ENCODE measurements at regions of chr4 and their contacts with region 1.

Region 1: DNA sequence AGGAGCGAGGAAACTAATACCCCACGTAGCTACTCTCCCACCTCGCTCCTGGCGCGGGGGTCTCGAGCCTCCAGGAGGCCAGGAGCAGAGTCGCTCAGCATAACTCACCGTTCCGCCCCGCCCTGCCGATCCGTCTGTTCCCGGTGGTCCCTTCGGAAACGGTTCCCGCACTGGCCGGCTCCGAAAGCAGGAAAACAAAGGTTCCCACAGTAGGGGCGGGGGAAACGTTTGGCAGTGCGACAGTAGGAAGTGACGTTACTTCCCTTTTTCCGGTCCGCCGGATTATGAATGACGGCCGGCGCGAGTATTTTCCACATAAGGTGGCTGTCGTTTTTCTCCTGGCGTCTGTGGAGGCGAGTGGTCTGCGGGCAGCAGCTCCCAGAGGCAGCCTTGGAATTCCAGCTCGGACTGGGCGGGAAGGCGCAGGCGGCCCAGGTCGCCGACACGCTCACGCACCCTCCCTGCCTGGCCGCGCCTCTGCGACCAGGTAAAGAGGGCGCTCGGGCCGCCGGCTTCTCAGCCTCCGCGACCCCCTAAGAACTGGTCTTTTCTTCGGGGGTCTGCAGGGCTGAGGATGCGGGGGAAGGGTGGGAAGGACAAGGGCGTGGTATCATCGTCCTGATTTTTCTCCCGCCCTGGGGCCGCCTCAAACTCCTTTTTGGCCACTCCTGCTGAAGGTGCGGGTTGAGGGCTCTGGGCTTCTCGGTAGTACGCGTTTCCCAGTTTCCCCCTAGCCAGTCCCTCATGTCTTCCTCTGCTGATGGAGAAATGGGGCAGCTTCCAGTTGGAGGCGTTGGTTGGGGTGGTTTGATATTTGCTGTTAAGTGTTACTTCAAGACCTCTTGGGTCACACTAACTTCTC is at the starts of genes GSTCD and INTS12:
- DNase-seq: peak; percentile 91 to 95
- ATAC-seq: peak; percentile 97 to 99 (median 99)
- H3K4me3 ChIP-seq: peak within 1 kb of the TSS; percentile 95
- H3K27ac ChIP-seq: peak within 1 kb of the TSS; percentile 91
- H3K4me1 ChIP-seq: peaks cover 18% of the 10 kb centered on the region
- H3K27me3 ChIP-seq: no peaks in the 10 kb centered on the region
- CTCF ChIP-seq: no peak
- total RNA-seq, gene GSTCD: 2.6 to 6.6 (median 4.5) TPM
- total RNA-seq, gene INTS12: 17.7 to 28.8 (median 20.2) TPM

Region 2: DNA sequence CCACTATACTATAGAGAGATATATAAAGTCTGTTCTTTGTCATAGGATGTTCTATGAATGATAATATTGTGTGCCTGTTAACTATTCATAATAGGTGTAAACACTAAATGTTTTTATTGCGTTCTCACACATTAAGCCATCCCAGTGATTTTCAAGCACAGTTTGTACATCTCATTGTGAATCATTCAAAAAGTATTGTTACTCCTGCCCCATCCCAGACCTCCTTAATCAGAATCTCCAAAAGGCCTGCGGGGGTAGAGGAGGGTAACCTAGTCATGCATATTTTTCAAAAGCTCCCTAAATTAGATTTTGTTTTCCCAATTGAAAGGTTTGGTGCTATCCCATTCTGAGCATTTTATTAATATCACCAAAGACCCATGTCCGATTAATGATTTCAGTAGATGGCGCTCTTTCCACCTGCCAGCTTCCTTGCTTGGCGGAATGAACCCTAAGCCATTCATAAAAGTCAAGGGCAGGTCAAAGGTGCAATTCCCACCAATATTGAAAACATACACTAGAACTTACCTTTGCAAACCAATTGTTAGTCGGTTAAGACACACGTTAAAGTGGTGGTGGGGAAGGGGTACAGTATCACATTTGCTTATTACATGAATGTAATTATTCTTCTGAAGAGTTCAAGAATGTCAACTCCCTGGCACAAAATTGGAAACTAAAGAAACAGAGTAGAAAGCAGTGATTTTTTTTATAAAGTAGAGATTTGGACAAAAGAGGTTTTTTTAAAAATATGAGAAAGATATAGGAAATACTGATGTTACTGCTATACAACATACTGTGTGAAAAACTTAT is 567.9 kb before region 1 on chr4:
- intact Hi-C with region 1: loop called in 1 of 2 experiments (anchors 5 kb)
- DNase-seq: no peak
- ATAC-seq: peak in 2 of 4 donors; percentile 67 to 78
- H3K4me3 ChIP-seq: no peak overlapping the region
- H3K27ac ChIP-seq: no peak overlapping the region
- H3K4me1 ChIP-seq: no peaks in the 10 kb centered on the region
- H3K27me3 ChIP-seq: no peaks in the 10 kb centered on the region
- CTCF ChIP-seq: peak; percentile 67

Region 3: DNA sequence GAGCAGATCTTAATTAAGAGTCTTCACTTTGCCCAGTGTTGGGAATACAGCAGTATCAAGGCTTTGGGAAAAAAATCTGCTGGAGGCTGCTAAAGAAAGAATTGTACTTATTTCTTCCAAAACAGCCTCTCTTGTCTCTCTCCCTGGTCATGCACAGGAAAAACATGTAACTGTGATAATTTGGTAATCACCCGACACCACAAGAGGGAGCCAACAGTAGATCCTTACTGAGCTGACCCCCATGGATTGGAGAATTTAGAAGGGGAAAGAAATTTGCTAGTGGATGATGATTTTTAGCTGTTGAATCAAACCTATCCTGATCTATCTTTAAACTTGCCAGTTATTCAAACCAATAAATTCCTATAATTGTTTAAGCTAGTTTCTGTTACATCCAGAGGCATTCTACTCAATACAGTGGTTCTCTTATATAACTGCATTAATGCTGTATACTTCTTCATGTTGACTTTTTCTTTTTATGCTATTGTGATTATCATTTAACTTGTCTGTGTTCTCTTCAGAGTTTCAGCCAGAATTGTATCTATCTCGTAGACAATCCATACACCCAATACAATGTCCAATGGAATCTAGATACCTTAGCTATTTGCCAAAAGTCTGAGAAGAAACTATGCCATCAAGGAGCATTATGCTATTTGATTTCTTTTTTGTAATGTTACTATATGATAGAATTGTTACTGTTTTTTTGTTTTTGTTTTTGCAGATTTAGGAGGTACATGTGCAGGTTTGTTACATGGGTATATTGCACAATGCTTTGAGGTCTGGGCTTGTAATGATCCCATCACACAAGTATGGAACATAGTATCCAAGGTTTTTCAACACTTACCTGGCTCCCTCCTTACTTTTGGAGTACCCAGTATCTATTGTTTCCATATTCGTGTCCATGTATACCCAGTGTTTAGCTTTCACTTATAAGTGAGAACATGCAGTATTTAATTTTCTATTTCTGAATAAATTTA is 187.7 kb before region 1 on chr4:
- intact Hi-C with region 1: loop called in 1 of 2 experiments (anchors 5 kb)
- DNase-seq: no peak
- ATAC-seq: peak in 2 of 4 donors; percentile 70
- H3K4me3 ChIP-seq: no peak overlapping the region
- H3K27ac ChIP-seq: no peak overlapping the region
- H3K4me1 ChIP-seq: no peaks in the 10 kb centered on the region
- H3K27me3 ChIP-seq: no peaks in the 10 kb centered on the region
- CTCF ChIP-seq: peak; percentile 65

Region 4: GRCh38 chr4:105624530-105624929 is 84.2 kb before region 1 on chr4:
- intact Hi-C with region 1: loop called in 1 of 2 experiments (anchors 1 kb)
- DNase-seq: peak; percentile 44 to 74
- ATAC-seq: peak; percentile 75 to 84 (median 82)
- H3K4me3 ChIP-seq: peak overlapping the region; percentile 19
- H3K27ac ChIP-seq: peak overlapping the region; percentile 56
- H3K4me1 ChIP-seq: peaks cover 46% of the 10 kb centered on the region
- H3K27me3 ChIP-seq: no peaks in the 10 kb centered on the region
- CTCF ChIP-seq: no peak

Region 5: GRCh38 chr4:105666693-105667092 is 42.1 kb before region 1 on chr4:
- intact Hi-C with region 1: no loop called
- DNase-seq: no peak
- ATAC-seq: peak in 2 of 4 donors; percentile 65 to 71
- H3K4me3 ChIP-seq: no peak overlapping the region
- H3K27ac ChIP-seq: no peak overlapping the region
- H3K4me1 ChIP-seq: no peaks in the 10 kb centered on the region
- H3K27me3 ChIP-seq: no peaks in the 10 kb centered on the region
- CTCF ChIP-seq: peak; percentile 28

Region 6: DNA sequence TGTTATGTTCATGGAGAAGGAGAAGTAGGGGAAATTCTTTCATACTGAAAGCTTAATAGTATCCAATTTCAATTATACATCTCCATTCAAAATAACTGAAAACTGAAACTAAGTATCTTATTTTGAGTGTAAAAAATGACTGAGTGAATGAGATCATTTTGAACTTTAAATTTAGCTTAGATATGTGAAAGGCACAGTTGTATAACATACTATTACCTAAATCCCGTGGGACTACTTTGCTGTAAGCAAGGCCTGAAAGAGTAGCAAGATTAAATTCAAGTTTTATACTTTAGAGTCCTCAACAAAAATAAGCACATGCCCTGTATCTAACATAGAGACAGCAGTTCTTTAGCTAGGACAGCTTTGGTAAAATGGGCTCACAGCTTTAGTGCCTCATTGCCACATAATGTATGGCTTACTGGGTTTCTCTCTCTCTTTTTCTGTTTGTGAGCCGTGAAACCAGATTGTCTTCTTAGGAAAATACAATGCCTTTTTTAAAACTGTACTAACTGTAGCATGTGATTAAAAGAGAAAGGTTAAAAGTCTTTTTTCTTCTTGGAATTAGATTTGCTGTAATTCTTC is 43.0 kb after region 1 on chr4:
- intact Hi-C with region 1: no loop called
- DNase-seq: no peak
- ATAC-seq: no peak
- H3K4me3 ChIP-seq: no peak overlapping the region
- H3K27ac ChIP-seq: no peak overlapping the region
- H3K4me1 ChIP-seq: no peaks in the 10 kb centered on the region
- H3K27me3 ChIP-seq: no peaks in the 10 kb centered on the region
- CTCF ChIP-seq: no peak

Measured in psoas muscle (tissue), 8 donors.